Posterior vena cava (tissue), 2 donors: ENCODE measurements at regions of chr7 and their contacts with region 1.

Region 1: DNA sequence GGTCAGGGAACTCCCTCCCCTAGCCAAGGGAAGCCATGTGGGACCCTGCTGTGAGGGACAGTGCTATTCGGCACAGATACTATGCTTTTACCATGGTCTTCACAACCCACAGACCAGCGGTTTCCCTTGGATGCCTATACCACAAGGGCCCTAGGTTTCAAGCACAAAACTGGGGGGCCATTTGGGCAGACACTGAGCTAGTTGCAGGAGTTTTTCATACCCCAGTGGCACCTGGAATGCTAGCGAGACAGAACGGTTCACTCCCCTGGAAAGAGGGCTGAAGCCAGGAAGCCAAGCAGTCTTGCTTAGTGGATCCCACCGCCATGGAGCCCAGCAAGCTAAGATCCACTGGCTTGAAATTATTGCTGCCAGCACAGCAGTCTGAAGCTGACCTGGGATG is 156.8 kb downstream of the THSD7A start:
- DNase-seq: peak; percentile 50

Region 2: GRCh38 chr7:10696064-10696463 is 979.1 kb before region 1 on chr7:
- intact Hi-C with region 1: no loop called
- DNase-seq: no peak

Region 3: DNA sequence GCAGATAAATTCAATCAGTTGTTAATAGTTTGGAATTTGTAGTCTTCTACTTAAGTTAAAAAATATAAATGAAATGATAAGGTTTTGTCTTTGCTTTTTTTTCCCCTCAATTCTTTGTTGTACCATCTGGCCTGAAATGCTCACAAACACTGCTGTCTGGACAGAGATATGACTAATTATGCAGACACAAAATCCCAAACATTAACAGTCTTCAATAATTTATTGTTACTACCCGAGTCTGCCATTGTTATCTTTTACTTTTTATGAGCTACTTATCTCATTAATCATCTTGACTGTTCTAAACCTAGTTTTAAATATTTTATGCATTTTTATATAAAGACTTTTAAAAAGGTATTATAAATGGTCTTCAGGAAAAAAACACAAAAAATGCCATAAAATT is 221.5 kb after region 1 on chr7:
- intact Hi-C with region 1: loop called in 1 of 2 experiments (anchors 5 kb)
- DNase-seq: no peak